CD4-positive, alpha-beta T cell (primary cell): ENCODE measurements at regions of chr2 and their contacts with region 1.

Region 1: DNA sequence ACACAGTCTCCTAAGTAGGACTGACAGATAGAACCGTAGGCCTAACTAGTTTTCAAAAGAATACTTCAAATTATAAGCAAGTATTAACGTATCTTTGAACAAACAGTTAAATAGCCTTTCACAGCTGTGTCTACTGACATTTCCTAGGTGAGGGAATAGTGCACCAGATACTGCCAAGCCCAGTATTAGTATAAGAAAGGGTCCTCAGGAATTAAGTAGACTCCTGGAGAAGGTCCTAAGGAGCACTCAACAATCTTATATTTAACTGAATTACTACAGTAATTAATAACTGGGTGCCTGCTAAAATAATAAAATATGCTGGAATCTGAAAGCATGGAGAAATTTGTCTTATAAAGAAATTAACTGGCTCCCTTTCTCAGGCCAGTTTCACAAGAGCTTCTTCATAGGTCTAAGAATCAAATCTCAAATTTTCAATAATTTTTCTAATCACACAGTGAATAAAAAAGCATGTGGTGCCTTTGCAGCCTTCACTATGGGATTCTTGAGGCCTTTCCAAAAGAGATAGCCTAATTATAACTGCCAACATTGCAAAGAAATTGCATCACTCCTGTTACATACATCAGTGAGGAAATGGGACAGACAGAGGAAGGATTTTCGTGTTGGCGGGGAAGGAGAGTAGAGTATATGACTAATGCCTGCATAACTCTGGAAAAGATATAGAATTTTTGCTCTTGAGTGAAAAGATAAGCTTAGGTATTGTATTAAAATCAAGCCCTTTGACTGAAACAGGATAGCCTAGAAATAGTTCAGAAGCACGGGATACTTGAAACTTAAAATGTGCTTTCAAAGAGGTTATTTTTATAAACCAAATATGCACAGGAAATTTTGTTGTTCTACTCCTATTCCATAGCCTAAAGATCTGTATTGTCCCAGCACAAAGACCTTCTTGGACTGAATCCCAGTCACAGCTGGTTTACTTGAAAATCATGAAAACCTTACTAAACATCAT is 228.6 kb upstream of the STK17B start:
- DNase-seq: no peak
- ATAC-seq: no peak
- H3K4me3 ChIP-seq: no peak overlapping the region
- H3K4me3 Mint-ChIP-seq: no peak overlapping the region
- H3K27ac ChIP-seq: no peak overlapping the region
- H3K27ac Mint-ChIP-seq: no peak overlapping the region
- H3K4me1 ChIP-seq: no peaks in the 10 kb centered on the region
- H3K4me1 Mint-ChIP-seq: no peaks in the 10 kb centered on the region
- H3K27me3 ChIP-seq: no peaks in the 10 kb centered on the region
- H3K27me3 Mint-ChIP-seq: no peaks in the 10 kb centered on the region
- CTCF ChIP-seq: no peak

Region 2: DNA sequence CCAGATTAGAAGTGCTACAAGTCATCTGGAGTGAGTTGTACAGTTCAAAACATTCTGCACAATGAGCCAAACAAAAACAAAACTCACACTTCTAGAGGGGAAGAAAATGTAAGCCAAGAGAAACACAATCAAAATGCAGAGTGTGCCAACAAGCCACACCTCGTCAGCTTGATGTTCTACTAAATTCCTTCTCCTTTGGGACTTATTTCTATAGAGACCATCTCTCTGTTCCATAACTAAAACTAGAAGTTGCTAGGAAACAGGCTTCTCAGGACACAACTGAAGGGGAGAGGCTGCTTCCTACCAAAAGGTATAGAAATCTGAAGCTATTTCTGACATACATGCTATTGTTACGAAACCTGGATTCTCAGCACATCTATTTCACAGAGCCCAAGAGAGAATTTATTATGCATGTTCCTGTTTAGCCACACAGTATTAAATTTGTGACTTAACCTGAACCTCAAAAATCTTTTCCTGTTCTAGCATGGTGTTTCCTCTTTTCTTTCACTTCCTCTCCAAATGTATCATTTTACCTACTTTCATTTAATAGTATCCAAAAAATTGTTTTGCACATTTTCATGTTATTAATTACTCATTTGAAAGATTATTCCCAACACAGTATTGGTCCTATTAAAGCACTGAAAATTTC is 28.1 kb after region 1 on chr2:
- CTCF ChIA-PET with region 1: no interaction called
- POLR2A ChIA-PET with region 1: no interaction called
- intact Hi-C with region 1: loop called in 1 of 2 experiments (anchors 1 kb)
- DNase-seq: no peak
- ATAC-seq: no peak
- H3K4me3 ChIP-seq: no peak overlapping the region
- H3K4me3 Mint-ChIP-seq: no peak overlapping the region
- H3K27ac ChIP-seq: no peak overlapping the region
- H3K27ac Mint-ChIP-seq: no peak overlapping the region
- H3K4me1 ChIP-seq: no peaks in the 10 kb centered on the region
- H3K4me1 Mint-ChIP-seq: peaks cover 6% of the 10 kb centered on the region
- H3K27me3 ChIP-seq: peaks cover 0 to 5% of the 10 kb centered on the region in 2 experiments
- H3K27me3 Mint-ChIP-seq: peaks cover 9% of the 10 kb centered on the region
- CTCF ChIP-seq: no peak